Adrenal gland (tissue), 19 donors: ENCODE measurements at regions of chr14 and their contacts with region 1.

Region 1: DNA sequence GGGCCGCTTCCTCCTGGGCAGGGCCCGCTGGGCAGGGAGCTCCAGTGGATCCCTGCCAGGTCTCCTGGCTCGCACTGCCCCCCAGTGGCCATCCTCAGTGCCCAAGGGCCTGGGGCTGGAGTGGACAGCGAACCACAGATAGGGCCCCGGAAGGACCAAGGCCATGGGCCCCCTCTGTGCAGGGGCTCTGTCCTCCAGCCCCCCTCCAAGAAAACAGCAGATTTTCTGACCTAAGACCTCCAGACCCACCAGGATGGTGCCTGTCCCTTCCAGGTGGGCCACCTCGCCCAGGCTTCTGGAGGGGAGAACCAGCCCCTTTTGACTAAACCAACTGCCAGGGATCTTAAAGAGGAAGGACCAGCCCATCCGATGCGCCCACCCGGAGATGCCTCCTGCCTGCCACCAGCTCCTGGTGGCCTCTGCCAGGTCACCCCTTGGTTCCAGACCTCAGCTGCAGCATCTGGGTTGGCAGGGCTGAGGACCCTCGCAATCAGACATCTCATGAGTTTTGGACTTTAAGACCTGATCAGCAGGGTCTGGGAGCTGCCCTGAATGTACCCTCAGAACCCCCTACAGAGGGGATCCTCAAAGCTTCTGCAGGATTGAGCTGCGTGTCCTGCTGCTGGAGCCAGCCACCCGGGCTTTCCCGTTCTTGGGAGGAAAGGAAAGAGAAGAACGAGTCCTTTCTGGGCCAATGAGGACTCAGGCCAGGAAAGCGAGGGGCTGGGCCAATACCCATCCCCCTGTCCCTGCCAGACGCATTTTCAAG is 325.8 kb upstream of the DIO3 start:
- DNase-seq: peak; percentile 50 to 87 (median 74)
- H3K4me3 ChIP-seq: no peak overlapping the region
- H3K27ac ChIP-seq: no peak overlapping the region
- H3K4me1 ChIP-seq: no peaks in the 10 kb centered on the region
- H3K27me3 ChIP-seq: no peaks in the 10 kb centered on the region
- CTCF ChIP-seq: peak; percentile 63 to 82 (median 72)
- POLR2A ChIP-seq: no peak

Region 2: DNA sequence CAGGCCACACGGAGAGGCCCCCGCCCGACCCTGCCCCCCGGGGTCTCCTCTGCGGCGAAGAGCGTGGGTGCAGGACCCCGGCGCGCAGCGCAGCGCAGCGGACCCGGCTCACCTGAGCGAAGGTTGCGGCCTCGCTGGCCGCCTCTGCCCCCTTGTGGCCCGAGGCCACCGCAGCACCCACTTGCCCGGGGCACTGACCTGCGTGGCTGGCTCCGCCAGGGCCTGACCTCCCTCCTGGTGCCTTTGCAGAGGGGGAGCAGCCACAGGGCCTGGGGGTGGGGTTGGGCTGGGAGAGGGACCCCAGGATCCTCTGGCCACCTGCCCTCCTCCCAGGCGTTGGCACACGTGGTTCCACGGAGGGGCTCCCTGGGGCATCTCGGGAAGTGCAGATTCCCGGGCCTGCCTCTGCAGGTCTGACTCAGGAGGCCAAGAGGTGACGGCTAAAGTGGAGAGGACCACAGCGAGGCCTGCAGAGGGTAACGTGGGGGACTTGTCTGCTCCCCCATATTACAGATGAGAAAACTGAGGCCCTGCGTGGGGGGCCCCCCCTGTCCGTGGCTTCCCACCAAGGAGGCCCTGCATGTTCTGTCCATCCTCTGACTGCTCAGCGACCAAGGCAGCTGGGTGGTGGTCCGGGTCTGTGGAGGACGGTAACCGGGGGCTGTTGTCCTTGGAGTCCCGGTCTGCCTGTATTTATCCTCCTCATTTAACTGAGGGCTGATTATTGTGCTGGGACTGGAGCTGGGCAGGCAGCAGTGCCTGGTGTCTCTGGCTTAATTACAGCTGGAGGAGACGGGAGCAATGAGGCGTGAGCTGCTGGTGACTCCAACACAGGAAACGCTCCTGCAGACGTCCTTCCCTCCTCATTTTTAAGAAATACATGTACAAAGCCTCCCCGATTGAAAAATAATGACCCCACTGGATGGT is 580.4 kb before region 1 on chr14:
- intact Hi-C with region 1: loop called in 1 of 2 experiments (anchors 10 kb)
- DNase-seq: peak in 4 of 7 donors; percentile 60 to 69 (median 66)
- H3K4me3 ChIP-seq: no peak overlapping the region
- H3K27ac ChIP-seq: no peak overlapping the region
- H3K4me1 ChIP-seq: peaks cover 2 to 5% of the 10 kb centered on the region in 2 donors
- H3K27me3 ChIP-seq: no peaks in the 10 kb centered on the region
- CTCF ChIP-seq: peak; percentile 54 to 87 (median 66)
- POLR2A ChIP-seq: no peak

Region 3: GRCh38 chr14:100900837-100901390 is 334.6 kb before region 1 on chr14:
- intact Hi-C with region 1: loop called in 1 of 2 experiments (anchors 10 kb)
- DNase-seq: peak; percentile 79 to 91 (median 84)
- H3K4me3 ChIP-seq: peak overlapping the region in 1 of 4 donors; percentile 18
- H3K27ac ChIP-seq: peak overlapping the region; percentile 29 to 79 (median 56)
- H3K4me1 ChIP-seq: peaks cover 29 to 50% of the 10 kb centered on the region in 2 donors
- H3K27me3 ChIP-seq: no peaks in the 10 kb centered on the region
- CTCF ChIP-seq: peak; percentile 20 to 68 (median 52)
- POLR2A ChIP-seq: peak in 1 of 2 donors; percentile 26

Region 4: GRCh38 chr14:101068313-101069227 is 166.9 kb before region 1 on chr14:
- intact Hi-C with region 1: loop called in 1 of 2 experiments (anchors 10 kb)
- DNase-seq: peak; percentile 1 to 50 (median 10)
- H3K4me3 ChIP-seq: no peak overlapping the region
- H3K27ac ChIP-seq: no peak overlapping the region
- H3K4me1 ChIP-seq: peaks cover 2% of the 10 kb centered on the region in 2 donors
- H3K27me3 ChIP-seq: no peaks in the 10 kb centered on the region
- CTCF ChIP-seq: no peak
- POLR2A ChIP-seq: no peak